CD8-positive, alpha-beta T cell (primary cell): ENCODE measurements at regions of chr13 and their contacts with region 1.

Region 1: GRCh38 chr13:25267715-25268114 is 19.6 kb downstream of the MTMR6 start:
- DNase-seq: peak in 2 of 9 experiments; percentile 31 to 51
- ATAC-seq: peak; percentile 92
- H3K4me3 ChIP-seq: no peak overlapping the region
- H3K4me3 Mint-ChIP-seq: no peak overlapping the region
- H3K27ac ChIP-seq: no peak overlapping the region
- H3K27ac Mint-ChIP-seq: peak overlapping the region; percentile 3
- H3K4me1 ChIP-seq: no peaks in the 10 kb centered on the region
- H3K4me1 Mint-ChIP-seq: peaks cover 16% of the 10 kb centered on the region
- H3K27me3 ChIP-seq: no peaks in the 10 kb centered on the region
- H3K27me3 Mint-ChIP-seq: no peaks in the 10 kb centered on the region
- CTCF ChIP-seq: no peak

Region 2: DNA sequence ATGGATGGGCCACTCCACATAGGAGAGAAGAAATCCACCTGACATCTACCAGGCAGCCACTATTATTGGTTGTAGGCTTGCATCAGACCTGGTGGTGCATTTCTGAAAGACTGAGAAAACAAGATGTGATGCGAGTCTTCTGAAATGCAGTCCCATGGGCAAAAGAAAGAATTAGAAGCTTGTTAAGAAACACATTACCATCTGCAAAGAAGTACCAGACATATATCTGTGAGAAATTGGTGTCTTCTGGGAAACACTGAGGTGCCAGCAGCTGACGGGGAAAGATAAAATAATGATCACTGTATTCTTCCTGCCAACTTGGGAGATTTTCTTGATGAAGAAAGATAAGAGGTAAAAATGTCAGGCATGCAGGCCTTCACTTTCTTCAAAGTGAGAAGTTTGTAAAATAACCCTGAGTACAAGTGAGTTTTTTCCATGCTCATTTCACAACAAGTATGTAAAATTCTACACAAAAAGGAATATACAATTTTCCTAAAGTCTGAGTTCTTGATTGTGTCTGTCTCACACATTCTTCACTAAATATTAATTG is 110.0 kb before region 1 on chr13:
- CTCF ChIA-PET with region 1: no interaction called
- POLR2A ChIA-PET with region 1: no interaction called
- intact Hi-C with region 1: no loop called
- DNase-seq: no peak
- ATAC-seq: no peak
- H3K4me3 ChIP-seq: no peak overlapping the region
- H3K4me3 Mint-ChIP-seq: no peak overlapping the region
- H3K27ac ChIP-seq: no peak overlapping the region
- H3K27ac Mint-ChIP-seq: no peak overlapping the region
- H3K4me1 ChIP-seq: no peaks in the 10 kb centered on the region
- H3K4me1 Mint-ChIP-seq: no peaks in the 10 kb centered on the region
- H3K27me3 ChIP-seq: no peaks in the 10 kb centered on the region
- H3K27me3 Mint-ChIP-seq: peaks cover 16% of the 10 kb centered on the region
- CTCF ChIP-seq: no peak

Region 3: GRCh38 chr13:25286969-25287961 is 19.6 kb after region 1 on chr13 and contains the start of gene MTMR6:
- CTCF ChIA-PET with region 1: interaction called, 3 read pairs
- POLR2A ChIA-PET with region 1: no interaction called
- intact Hi-C with region 1: loop called (anchors 2 kb)
- DNase-seq: peak; percentile 90 to 98 (median 94)
- ATAC-seq: peak; percentile 81
- H3K4me3 ChIP-seq: peak within 1 kb of the TSS; percentile 83 to 95
- H3K4me3 Mint-ChIP-seq: peak within 1 kb of the TSS; percentile 98
- H3K27ac ChIP-seq: peak within 1 kb of the TSS; percentile 94 to 97
- H3K27ac Mint-ChIP-seq: peak within 1 kb of the TSS; percentile 99
- H3K4me1 ChIP-seq: peaks cover 23% of the 10 kb centered on the region
- H3K4me1 Mint-ChIP-seq: peaks cover 41% of the 10 kb centered on the region
- H3K27me3 ChIP-seq: peaks cover 0 to 2% of the 10 kb centered on the region in 2 experiments
- H3K27me3 Mint-ChIP-seq: peaks cover 10% of the 10 kb centered on the region
- CTCF ChIP-seq: peak; percentile 99
- total RNA-seq, gene MTMR6: 41.9 to 44.4 TPM

Region 4: DNA sequence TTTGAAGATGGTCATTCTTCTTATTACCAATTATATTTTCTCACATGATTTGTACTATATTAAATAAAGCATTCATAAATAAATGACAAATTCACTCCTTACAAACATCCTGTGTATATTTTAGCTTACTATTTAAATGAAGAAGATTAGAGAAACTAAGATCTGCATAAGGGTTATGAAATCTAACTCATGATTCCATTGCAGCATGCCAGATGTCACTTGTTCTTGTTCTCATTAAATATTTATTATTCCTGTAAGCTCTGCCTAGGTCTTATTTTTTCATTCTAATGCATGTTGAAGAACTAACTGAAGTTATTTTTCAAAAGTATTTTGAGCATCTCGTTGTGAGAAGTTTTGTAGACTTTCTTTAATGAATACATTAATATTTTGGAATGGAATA is 52.1 kb after region 1 on chr13:
- CTCF ChIA-PET with region 1: no interaction called
- POLR2A ChIA-PET with region 1: no interaction called
- intact Hi-C with region 1: loop called (anchors 5 kb)
- DNase-seq: no peak
- ATAC-seq: no peak
- H3K4me3 ChIP-seq: no peak overlapping the region
- H3K4me3 Mint-ChIP-seq: no peak overlapping the region
- H3K27ac ChIP-seq: no peak overlapping the region
- H3K27ac Mint-ChIP-seq: no peak overlapping the region
- H3K4me1 ChIP-seq: no peaks in the 10 kb centered on the region
- H3K4me1 Mint-ChIP-seq: peaks cover 2% of the 10 kb centered on the region
- H3K27me3 ChIP-seq: no peaks in the 10 kb centered on the region
- H3K27me3 Mint-ChIP-seq: no peaks in the 10 kb centered on the region
- CTCF ChIP-seq: no peak